ENCODE measurements at regions of chr1 and their contacts with region 1.

Region 1: GRCh38 chr1:59759156-59759925 is 55.4 kb upstream of the HOOK1 start:
- DNase-seq: peak; percentile 82 to 92 (median 90)
- ATAC-seq: peak; percentile 95 to 96
- H3K4me3 ChIP-seq: peak overlapping the region; percentile 51
- H3K27ac ChIP-seq: peak overlapping the region; percentile 51
- H3K4me1 ChIP-seq: no peaks in the 10 kb centered on the region
- H3K27me3 ChIP-seq: no peaks in the 10 kb centered on the region

Region 2: GRCh38 chr1:58773406-58773840 is 985.9 kb before region 1 on chr1:
- intact Hi-C with region 1: loop called in 1 of 4 experiments (anchors 5 kb)
- DNase-seq: peak; percentile 69 to 77 (median 73)
- ATAC-seq: peak; percentile 93 to 94
- H3K4me3 ChIP-seq: no peak overlapping the region
- H3K27ac ChIP-seq: no peak overlapping the region
- H3K4me1 ChIP-seq: peaks cover 2% of the 10 kb centered on the region
- H3K27me3 ChIP-seq: no peaks in the 10 kb centered on the region

Region 3: GRCh38 chr1:59266180-59266926 is 493.0 kb before region 1 on chr1:
- intact Hi-C with region 1: no loop called
- DNase-seq: peak in 1 of 3 donors; percentile 45
- ATAC-seq: peak; percentile 42 to 64
- H3K4me3 ChIP-seq: no peak overlapping the region
- H3K27ac ChIP-seq: no peak overlapping the region
- H3K4me1 ChIP-seq: peaks cover 2% of the 10 kb centered on the region
- H3K27me3 ChIP-seq: no peaks in the 10 kb centered on the region

Region 4: GRCh38 chr1:59699227-59699847 is 60.0 kb before region 1 on chr1:
- intact Hi-C with region 1: loop called in 1 of 4 experiments (anchors 5 kb)
- DNase-seq: no peak
- ATAC-seq: peak in 1 of 2 donors; percentile 44
- H3K4me3 ChIP-seq: no peak overlapping the region
- H3K27ac ChIP-seq: no peak overlapping the region
- H3K4me1 ChIP-seq: peaks cover 11% of the 10 kb centered on the region
- H3K27me3 ChIP-seq: no peaks in the 10 kb centered on the region

Region 5: GRCh38 chr1:59718064-59718988 is 41.0 kb before region 1 on chr1:
- intact Hi-C with region 1: loop called in 1 of 4 experiments (anchors 5 kb)
- DNase-seq: peak in 1 of 3 donors; percentile 65
- ATAC-seq: peak; percentile 47 to 79
- H3K4me3 ChIP-seq: no peak overlapping the region
- H3K27ac ChIP-seq: peak overlapping the region; percentile 97
- H3K4me1 ChIP-seq: peaks cover 5% of the 10 kb centered on the region
- H3K27me3 ChIP-seq: no peaks in the 10 kb centered on the region

Measured in right cardiac atrium (tissue), 5 donors.